Activated CD8-positive, alpha-beta memory T cell treated with anti-CD3 and anti-CD28 coated beads, Interleukin-2, amount 10 ng/mL, durations not matched to agents 7 days and 5 days (primary cell): ENCODE measurements at regions of chr16 and their contacts with region 1.

Region 1: GRCh38 chr16:57416122-57416509 is 11.5 kb downstream of the CCL17 start:
- DNase-seq: no peak
- ATAC-seq: no peak
- H3K4me3 Mint-ChIP-seq: no peak overlapping the region
- H3K27ac Mint-ChIP-seq: no peak overlapping the region
- H3K4me1 Mint-ChIP-seq: peaks cover 19% of the 10 kb centered on the region
- H3K27me3 Mint-ChIP-seq: no peaks in the 10 kb centered on the region

Region 2: GRCh38 chr16:57128771-57129389 is 287.2 kb before region 1 on chr16:
- CTCF ChIA-PET with region 1: no interaction called
- DNase-seq: peak; percentile 86
- ATAC-seq: peak; percentile 81
- H3K4me3 Mint-ChIP-seq: peak overlapping the region; percentile 74
- H3K27ac Mint-ChIP-seq: peak overlapping the region; percentile 95
- H3K4me1 Mint-ChIP-seq: peaks cover 82% of the 10 kb centered on the region
- H3K27me3 Mint-ChIP-seq: no peaks in the 10 kb centered on the region

Region 3: DNA sequence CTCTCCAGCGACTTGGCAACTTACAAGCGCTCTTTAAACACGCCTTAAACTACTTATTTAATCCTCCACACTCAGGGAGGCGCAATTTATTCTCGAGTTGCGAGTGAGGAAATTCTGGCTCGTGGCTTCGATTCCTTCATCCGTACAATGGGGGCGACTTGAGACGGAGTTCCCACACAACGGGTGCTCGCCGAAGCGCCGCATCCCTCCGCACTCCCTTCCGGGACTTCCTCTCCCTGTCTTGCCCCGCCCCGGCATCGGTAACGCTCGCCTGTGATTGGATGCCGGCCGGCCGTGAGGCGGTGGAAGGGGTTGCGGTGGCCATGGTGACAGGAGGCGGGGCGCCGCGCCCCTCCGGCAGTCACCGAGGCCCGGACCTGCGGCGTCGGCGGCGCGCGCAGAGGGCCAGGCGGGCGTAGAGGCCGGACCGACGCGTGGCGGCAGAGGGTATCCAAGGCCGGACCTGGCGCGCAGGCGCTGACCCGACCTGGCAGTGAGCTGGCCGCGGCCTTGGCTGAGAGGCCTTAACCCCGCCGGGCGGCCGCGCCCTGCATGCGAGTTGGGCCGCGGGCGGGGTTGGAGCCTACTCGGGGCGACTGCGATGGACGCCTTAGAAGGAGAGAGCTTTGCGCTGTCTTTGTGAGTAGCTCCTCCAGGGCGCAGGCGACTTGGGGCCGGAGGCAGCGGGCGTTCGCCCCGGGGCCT is 171.2 kb before region 1 on chr16 and contains the start of gene ARL2BP:
- CTCF ChIA-PET with region 1: interaction called, 10 read pairs
- DNase-seq: peak; percentile 98
- ATAC-seq: peak; percentile 97
- H3K4me3 Mint-ChIP-seq: peak within 1 kb of the TSS; percentile 85
- H3K27ac Mint-ChIP-seq: peak within 1 kb of the TSS; percentile 90
- H3K4me1 Mint-ChIP-seq: peaks cover 18% of the 10 kb centered on the region
- H3K27me3 Mint-ChIP-seq: no peaks in the 10 kb centered on the region
- total RNA-seq, gene ARL2BP: 24.9 to 30.2 TPM

Region 4: GRCh38 chr16:57316390-57317017 is 99.6 kb before region 1 on chr16:
- CTCF ChIA-PET with region 1: interaction called, 14 read pairs
- DNase-seq: no peak
- ATAC-seq: no peak
- H3K4me3 Mint-ChIP-seq: no peak overlapping the region
- H3K27ac Mint-ChIP-seq: no peak overlapping the region
- H3K4me1 Mint-ChIP-seq: peaks cover 17% of the 10 kb centered on the region
- H3K27me3 Mint-ChIP-seq: peaks cover 4% of the 10 kb centered on the region

Region 5: GRCh38 chr16:57403965-57404817 is 11.9 kb before region 1 on chr16 and contains the start of gene CCL17:
- CTCF ChIA-PET with region 1: interaction called, 17 read pairs
- DNase-seq: no peak
- ATAC-seq: no peak
- H3K4me3 Mint-ChIP-seq: no peak within 1 kb of the TSS
- H3K27ac Mint-ChIP-seq: no peak within 1 kb of the TSS
- H3K4me1 Mint-ChIP-seq: no peaks in the 10 kb centered on the region
- H3K27me3 Mint-ChIP-seq: peaks cover 7% of the 10 kb centered on the region
- total RNA-seq, gene CCL17: 0.59 TPM in 1 of 2 experiments, not detected in the other

Region 6: GRCh38 chr16:57432989-57433388 is 16.9 kb after region 1 on chr16:
- CTCF ChIA-PET with region 1: interaction called, 37 read pairs
- DNase-seq: no peak
- ATAC-seq: no peak
- H3K4me3 Mint-ChIP-seq: no peak overlapping the region
- H3K27ac Mint-ChIP-seq: no peak overlapping the region
- H3K4me1 Mint-ChIP-seq: no peaks in the 10 kb centered on the region
- H3K27me3 Mint-ChIP-seq: no peaks in the 10 kb centered on the region

Region 7: DNA sequence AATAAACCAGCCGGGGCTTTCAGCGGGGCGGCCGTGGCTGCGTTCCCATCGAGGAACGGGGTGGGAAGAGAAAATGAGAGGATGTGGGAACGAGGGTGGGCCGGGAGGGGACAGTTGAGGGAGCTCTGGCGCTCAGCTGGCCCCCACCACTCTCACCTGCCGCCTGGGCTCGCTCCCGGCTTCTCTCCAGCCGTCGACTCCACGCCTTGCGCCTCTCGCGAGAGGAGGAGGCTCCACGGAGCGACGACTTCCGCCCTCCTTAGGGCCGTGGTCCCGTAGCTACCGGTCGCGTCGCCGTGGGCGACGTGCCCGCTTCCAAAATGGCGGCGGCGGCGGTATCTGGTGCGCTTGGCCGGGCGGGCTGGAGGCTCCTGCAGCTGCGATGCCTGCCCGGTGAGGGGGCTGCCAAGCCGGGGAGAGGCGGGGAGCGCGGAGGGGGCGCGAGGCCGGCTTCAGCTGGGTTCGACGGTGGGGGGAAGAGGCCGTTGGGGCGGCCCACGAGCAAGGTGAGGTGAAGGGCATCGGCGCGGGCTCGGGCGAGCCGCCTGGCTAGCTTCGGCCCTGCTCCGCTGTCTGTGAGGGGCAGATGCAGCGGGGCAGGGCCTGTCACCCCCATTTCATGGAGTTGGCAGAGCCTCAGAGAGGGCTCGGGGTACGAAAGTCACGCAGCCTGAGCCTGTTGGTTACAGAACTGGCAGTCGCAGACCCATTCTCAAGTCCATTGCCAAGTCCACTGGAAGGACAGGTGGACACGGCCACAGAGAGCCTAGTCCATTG is 31.3 kb after region 1 on chr16 and contains the starts of genes CIAPIN1 and COQ9:
- CTCF ChIA-PET with region 1: interaction called, 30 read pairs
- DNase-seq: peak; percentile 97
- ATAC-seq: peak; percentile 100
- H3K4me3 Mint-ChIP-seq: peak within 1 kb of the TSS; percentile 94
- H3K27ac Mint-ChIP-seq: peak within 1 kb of the TSS; percentile 86
- H3K4me1 Mint-ChIP-seq: peaks cover 37% of the 10 kb centered on the region
- H3K27me3 Mint-ChIP-seq: no peaks in the 10 kb centered on the region
- total RNA-seq, gene CIAPIN1: 46.5 to 62.5 TPM
- total RNA-seq, gene COQ9: 36.8 to 43.1 TPM

Region 8: GRCh38 chr16:57462209-57462977 is 46.3 kb after region 1 on chr16 and contains the start of gene POLR2C:
- CTCF ChIA-PET with region 1: interaction called, 17 read pairs
- DNase-seq: peak; percentile 94
- ATAC-seq: peak; percentile 96
- H3K4me3 Mint-ChIP-seq: peak within 1 kb of the TSS; percentile 94
- H3K27ac Mint-ChIP-seq: peak within 1 kb of the TSS; percentile 98
- H3K4me1 Mint-ChIP-seq: peaks cover 31% of the 10 kb centered on the region
- H3K27me3 Mint-ChIP-seq: no peaks in the 10 kb centered on the region
- total RNA-seq, gene POLR2C: 48.6 to 61.7 TPM